Heart right ventricle (tissue), 16 donors: ENCODE measurements at regions of chr11 and their contacts with region 1.

Region 1: DNA sequence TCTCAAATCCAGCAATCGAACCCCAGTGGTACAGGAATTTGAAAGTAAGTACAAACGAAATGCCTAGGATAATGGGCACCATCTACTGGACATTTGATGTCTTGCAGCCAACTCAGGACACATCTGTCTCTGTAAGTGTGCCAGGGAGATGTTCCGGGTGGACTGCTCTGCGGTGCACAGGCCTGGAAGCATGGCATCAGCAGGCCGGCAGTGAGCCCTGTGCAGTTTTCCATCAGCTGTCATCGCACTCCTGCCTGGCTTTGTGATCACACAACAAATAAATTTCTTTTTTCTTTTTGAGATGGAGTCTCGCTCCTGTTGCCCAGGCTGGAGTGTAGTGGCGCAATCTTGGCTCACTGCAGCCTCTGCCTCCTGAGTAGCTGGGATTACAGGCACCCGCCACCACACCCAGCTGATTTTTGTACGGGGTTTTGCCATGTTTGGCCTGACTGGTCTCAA is 71.0 kb downstream of the JAM3 start:
- DNase-seq: peak in 1 of 2 donors; percentile 82
- ATAC-seq: peak; percentile 86 to 94 (median 92)
- H3K4me3 ChIP-seq: no peak overlapping the region
- H3K27ac ChIP-seq: peak overlapping the region in 4 of 10 donors; percentile 27 to 45 (median 44)
- H3K4me1 ChIP-seq: peaks cover 0 to 18% (median 11%) of the 10 kb centered on the region in 9 donors
- H3K27me3 ChIP-seq: no peaks in the 10 kb centered on the region
- CTCF ChIP-seq: peak; percentile 83 to 95 (median 91)

Region 2: GRCh38 chr11:133927690-133928627 is 211.9 kb before region 1 on chr11:
- intact Hi-C with region 1: loop called (anchors 2 to 10 kb)
- DNase-seq: peak; percentile 57 to 67
- ATAC-seq: peak; percentile 74 to 88 (median 82)
- H3K4me3 ChIP-seq: peak overlapping the region in 5 of 10 donors; percentile 13 to 41 (median 17)
- H3K27ac ChIP-seq: peak overlapping the region in 1 of 10 donors; percentile 20
- H3K4me1 ChIP-seq: peaks cover 5 to 22% (median 14%) of the 10 kb centered on the region in 9 donors
- H3K27me3 ChIP-seq: no peaks in the 10 kb centered on the region
- CTCF ChIP-seq: peak; percentile 67 to 91 (median 86)

Region 3: GRCh38 chr11:133947321-133947756 is 192.6 kb before region 1 on chr11:
- intact Hi-C with region 1: loop called in 1 of 10 experiments (anchors 5 kb)
- DNase-seq: peak; percentile 57 to 65
- ATAC-seq: peak; percentile 24 to 59 (median 42)
- H3K4me3 ChIP-seq: peak overlapping the region in 6 of 10 donors; percentile 1 to 32 (median 10)
- H3K27ac ChIP-seq: peak overlapping the region in 9 of 10 donors; percentile 5 to 95 (median 63)
- H3K4me1 ChIP-seq: peaks cover 27 to 88% (median 70%) of the 10 kb centered on the region in 9 donors
- H3K27me3 ChIP-seq: peaks cover 0 to 12% (median 0%) of the 10 kb centered on the region in 7 donors
- CTCF ChIP-seq: peak in 8 of 9 donors; percentile 21 to 68 (median 48)

Region 4: DNA sequence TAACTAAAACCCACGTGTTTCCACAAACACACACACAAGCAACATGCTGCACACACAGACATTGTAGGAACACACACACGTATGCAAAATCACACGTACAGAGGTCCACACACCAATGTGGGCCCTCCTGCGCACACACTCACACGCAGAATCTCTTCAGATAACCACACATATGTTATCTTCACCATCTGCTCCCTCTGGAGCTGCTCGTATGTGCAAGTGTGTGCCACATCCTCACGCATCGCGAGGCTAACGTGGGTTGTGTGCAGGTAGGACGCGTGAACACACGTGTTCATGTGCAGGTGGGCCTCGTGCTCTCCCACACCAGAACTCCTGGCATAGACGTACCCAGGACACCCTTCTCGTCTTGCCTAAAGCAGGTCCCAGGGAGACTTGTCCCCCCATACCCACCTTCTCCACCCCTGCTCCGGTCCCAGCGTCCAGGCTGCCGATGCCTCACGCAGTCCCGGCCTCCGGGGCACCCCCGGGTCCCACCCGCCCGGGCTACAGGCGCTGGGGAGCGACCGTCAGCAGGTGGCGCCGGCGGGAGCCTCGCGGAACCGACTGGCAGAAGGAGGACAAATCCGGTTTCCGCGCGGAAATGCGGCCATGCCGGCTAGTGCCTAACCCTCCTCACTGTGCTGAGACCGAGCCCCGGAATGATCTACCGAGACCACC is 172.8 kb before region 1 on chr11:
- intact Hi-C with region 1: loop called in 1 of 10 experiments (anchors 10 kb)
- DNase-seq: peak; percentile 56 to 77
- ATAC-seq: peak; percentile 49 to 84 (median 76)
- H3K4me3 ChIP-seq: peak overlapping the region in 7 of 10 donors; percentile 22 to 49 (median 40)
- H3K27ac ChIP-seq: no peak overlapping the region
- H3K4me1 ChIP-seq: peaks cover 0 to 11% (median 4%) of the 10 kb centered on the region in 9 donors
- H3K27me3 ChIP-seq: peaks cover 0 to 23% (median 3%) of the 10 kb centered on the region in 7 donors
- CTCF ChIP-seq: peak; percentile 29 to 81 (median 69)

Region 5: GRCh38 chr11:134068829-134069425 is 71.0 kb before region 1 on chr11 and contains the start of gene JAM3:
- intact Hi-C with region 1: loop called in 1 of 10 experiments (anchors 5 kb)
- DNase-seq: peak; percentile 96 to 97
- ATAC-seq: peak; percentile 98 to 99 (median 99)
- H3K4me3 ChIP-seq: peak within 1 kb of the TSS; percentile 66 to 96 (median 87)
- H3K27ac ChIP-seq: peak within 1 kb of the TSS; percentile 70 to 92 (median 86)
- H3K4me1 ChIP-seq: peaks cover 0 to 22% (median 18%) of the 10 kb centered on the region in 9 donors
- H3K27me3 ChIP-seq: peaks cover 0 to 31% (median 0%) of the 10 kb centered on the region in 7 donors
- CTCF ChIP-seq: no peak
- total RNA-seq, gene JAM3: 20.4 to 55.4 (median 34.9) TPM

Region 6: GRCh38 chr11:134223836-134224709 is 84.2 kb after region 1 on chr11 and contains the starts of genes NCAPD3 and VPS26B:
- intact Hi-C with region 1: loop called in 1 of 10 experiments (anchors 5 kb)
- DNase-seq: peak; percentile 96 to 97
- ATAC-seq: peak; percentile 93 to 98 (median 95)
- H3K4me3 ChIP-seq: peak within 1 kb of the TSS; percentile 68 to 90 (median 76)
- H3K27ac ChIP-seq: peak within 1 kb of the TSS; percentile 81 to 97 (median 94)
- H3K4me1 ChIP-seq: peaks cover 6 to 49% (median 42%) of the 10 kb centered on the region in 9 donors
- H3K27me3 ChIP-seq: no peaks in the 10 kb centered on the region
- CTCF ChIP-seq: peak in 1 of 9 donors; percentile 9
- total RNA-seq, gene NCAPD3: 7.2 to 16.7 (median 11.4) TPM
- total RNA-seq, gene VPS26B: 30.7 to 49.6 (median 35.3) TPM